Activated CD8-positive, alpha-beta T cell treated with anti-CD3 and anti-CD28 coated beads, Interleukin-2, amount 10 ng/mL, durations not matched to agents 7 days and 5 days (primary cell): ENCODE measurements at regions of chr13 and their contacts with region 1.

Region 1: GRCh38 chr13:48975856-48976575 is at the start of gene FNDC3A:
- DNase-seq: peak; percentile 91
- ATAC-seq: peak; percentile 85
- H3K4me3 Mint-ChIP-seq: peak within 1 kb of the TSS; percentile 89
- H3K27ac Mint-ChIP-seq: peak within 1 kb of the TSS; percentile 98
- H3K4me1 Mint-ChIP-seq: peaks cover 37% of the 10 kb centered on the region
- H3K27me3 Mint-ChIP-seq: no peaks in the 10 kb centered on the region
- total RNA-seq, gene FNDC3A: 25.5 to 25.7 TPM

Region 2: GRCh38 chr13:48885027-48885395 is 91.0 kb before region 1 on chr13:
- CTCF ChIA-PET with region 1: no interaction called
- POLR2A ChIA-PET with region 1: interaction called, 13 read pairs
- DNase-seq: no peak
- ATAC-seq: no peak
- H3K4me3 Mint-ChIP-seq: no peak overlapping the region
- H3K27ac Mint-ChIP-seq: no peak overlapping the region
- H3K4me1 Mint-ChIP-seq: peaks cover 53% of the 10 kb centered on the region
- H3K27me3 Mint-ChIP-seq: no peaks in the 10 kb centered on the region

Region 3: DNA sequence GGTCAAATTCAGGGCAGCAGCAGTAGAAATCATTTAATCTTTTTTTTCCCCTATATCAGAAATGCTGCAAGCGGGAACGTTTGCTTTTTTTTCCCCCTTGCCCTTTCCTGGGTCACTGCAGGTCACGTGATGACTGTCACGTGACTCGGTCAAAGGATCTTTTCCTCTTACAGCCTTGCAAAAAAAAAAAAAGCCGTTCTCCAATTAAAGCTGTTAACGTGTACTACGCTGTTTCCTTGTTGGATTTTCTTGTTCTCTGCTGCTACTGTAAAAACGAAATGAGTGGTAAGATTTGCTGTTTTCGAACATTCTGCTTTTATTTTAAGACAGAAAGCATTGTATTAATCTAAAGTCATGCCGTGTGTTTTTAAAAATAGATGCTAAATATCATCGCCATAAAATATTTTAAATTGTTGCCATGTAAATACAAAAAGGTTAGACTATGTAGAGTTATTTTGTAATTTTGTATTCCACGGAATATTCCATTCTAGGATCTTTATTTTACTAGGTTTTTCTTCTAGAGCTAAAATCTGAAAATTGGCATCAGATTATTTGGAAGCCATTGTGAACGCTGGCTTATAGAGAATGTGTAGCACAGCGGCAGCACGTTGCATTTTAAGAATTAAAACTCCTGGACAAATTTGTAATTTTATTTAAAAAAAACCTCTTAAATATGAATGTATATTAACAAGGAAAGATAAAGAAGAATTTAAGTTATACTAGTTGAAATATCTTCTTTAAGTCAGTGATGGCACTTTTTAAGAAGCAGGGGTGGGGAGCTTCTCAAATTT is 134.3 kb after region 1 on chr13:
- CTCF ChIA-PET with region 1: interaction called, 3 read pairs
- POLR2A ChIA-PET with region 1: interaction called, 14 read pairs
- DNase-seq: peak; percentile 85
- ATAC-seq: peak; percentile 83
- H3K4me3 Mint-ChIP-seq: peak overlapping the region; percentile 89
- H3K27ac Mint-ChIP-seq: peak overlapping the region; percentile 92
- H3K4me1 Mint-ChIP-seq: peaks cover 25% of the 10 kb centered on the region
- H3K27me3 Mint-ChIP-seq: no peaks in the 10 kb centered on the region

Region 4: DNA sequence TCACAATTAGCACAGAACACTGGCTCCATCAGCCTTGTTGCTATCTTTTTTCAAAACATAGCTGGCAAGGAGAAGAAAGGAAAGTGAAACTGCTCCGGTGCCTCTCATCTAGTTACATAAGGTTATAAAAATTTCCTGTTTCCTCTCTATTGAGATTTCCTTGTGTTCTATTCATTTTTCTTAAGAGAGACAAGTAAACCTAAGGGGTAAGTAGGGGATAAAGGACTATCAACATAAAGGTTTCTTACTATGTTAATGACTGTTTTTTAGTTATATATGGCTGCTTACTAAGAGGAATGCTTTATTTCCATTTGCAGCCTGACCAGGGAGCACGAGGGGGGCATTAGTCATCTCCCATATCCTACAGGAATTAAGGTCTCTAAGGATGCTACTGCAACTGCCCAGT is 170.9 kb after region 1 on chr13:
- CTCF ChIA-PET with region 1: no interaction called
- POLR2A ChIA-PET with region 1: no interaction called
- DNase-seq: peak; percentile 39
- ATAC-seq: peak; percentile 82
- H3K4me3 Mint-ChIP-seq: peak overlapping the region; percentile 72
- H3K27ac Mint-ChIP-seq: peak overlapping the region; percentile 86
- H3K4me1 Mint-ChIP-seq: peaks cover 23% of the 10 kb centered on the region
- H3K27me3 Mint-ChIP-seq: no peaks in the 10 kb centered on the region